Activated CD4-positive, alpha-beta memory T cell treated with anti-CD3 and anti-CD28 coated beads for 36 hours (primary cell): ENCODE measurements at regions of chr5 and their contacts with region 1.

Region 1: GRCh38 chr5:8730194-8730593 is 815.7 kb downstream of the SEMA5A start:
- DNase-seq: no peak
- H3K4me3 Mint-ChIP-seq: no peak overlapping the region
- H3K27ac Mint-ChIP-seq: no peak overlapping the region
- H3K4me1 Mint-ChIP-seq: no peaks in the 10 kb centered on the region
- H3K27me3 Mint-ChIP-seq: no peaks in the 10 kb centered on the region

Region 2: GRCh38 chr5:8650186-8650585 is 80.0 kb before region 1 on chr5:
- CTCF ChIA-PET with region 1: no interaction called
- POLR2A ChIA-PET with region 1: no interaction called
- intact Hi-C with region 1: no loop called
- DNase-seq: no peak
- H3K4me3 Mint-ChIP-seq: no peak overlapping the region
- H3K27ac Mint-ChIP-seq: no peak overlapping the region
- H3K4me1 Mint-ChIP-seq: no peaks in the 10 kb centered on the region
- H3K27me3 Mint-ChIP-seq: no peaks in the 10 kb centered on the region

Region 3: DNA sequence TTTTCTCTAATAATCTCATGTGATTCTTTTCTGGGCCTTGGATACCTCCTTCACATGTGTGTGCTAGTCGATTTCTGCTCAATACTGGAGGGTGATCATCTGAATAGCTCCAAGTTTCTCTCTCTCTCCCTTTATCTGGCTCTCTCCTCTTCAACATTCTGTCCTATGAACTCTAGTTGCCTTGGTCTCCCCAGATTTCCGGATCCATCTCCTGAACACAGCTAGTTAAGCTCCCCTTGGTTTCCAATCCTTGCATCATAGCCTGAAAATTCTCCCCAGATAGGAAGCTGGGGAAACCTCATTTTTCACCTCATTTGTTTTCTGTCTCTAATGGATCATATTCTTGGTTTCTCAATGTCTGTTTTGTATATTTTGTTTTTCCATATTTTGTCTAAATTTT is 28.9 kb before region 1 on chr5:
- CTCF ChIA-PET with region 1: no interaction called
- POLR2A ChIA-PET with region 1: no interaction called
- intact Hi-C with region 1: loop called (anchors 1 kb)
- DNase-seq: no peak
- H3K4me3 Mint-ChIP-seq: no peak overlapping the region
- H3K27ac Mint-ChIP-seq: no peak overlapping the region
- H3K4me1 Mint-ChIP-seq: no peaks in the 10 kb centered on the region
- H3K27me3 Mint-ChIP-seq: no peaks in the 10 kb centered on the region